ENCODE measurements at regions of chr15 and their contacts with region 1.

Region 1: GRCh38 chr15:92954578-92954977 is 54.5 kb downstream of the CHD2 start:
- DNase-seq: no peak
- ATAC-seq: no peak
- H3K4me3 ChIP-seq: no peak overlapping the region
- H3K27ac ChIP-seq: no peak overlapping the region
- H3K4me1 ChIP-seq: no peaks in the 10 kb centered on the region
- H3K27me3 ChIP-seq: no peaks in the 10 kb centered on the region
- CTCF ChIP-seq: peak in 3 of 4 donors; percentile 10 to 35 (median 23)
- POLR2A ChIP-seq: no peak

Region 2: DNA sequence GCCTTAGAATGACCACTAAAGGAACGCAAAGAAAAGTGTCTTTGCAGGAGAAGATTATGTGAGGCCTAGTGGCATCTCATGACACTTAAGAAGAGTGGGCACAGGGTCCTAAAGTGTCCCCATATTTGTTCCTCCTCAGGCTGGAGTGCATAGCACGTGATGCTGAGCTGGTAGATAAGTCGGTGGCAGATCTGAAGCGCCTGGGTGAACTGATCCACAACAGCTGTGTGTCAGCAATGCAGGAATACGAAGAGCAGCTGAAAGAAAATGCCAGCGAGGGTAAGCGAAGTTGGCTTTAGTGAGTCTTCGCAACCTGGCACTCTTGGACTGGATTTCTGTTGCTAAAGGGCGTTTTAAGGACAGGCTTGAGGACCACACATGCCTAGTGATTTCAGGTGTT is 38.1 kb after region 1 on chr15:
- intact Hi-C with region 1: loop called in 1 of 2 experiments (anchors 10 kb)
- DNase-seq: no peak
- ATAC-seq: no peak
- H3K4me3 ChIP-seq: no peak overlapping the region
- H3K27ac ChIP-seq: no peak overlapping the region
- H3K4me1 ChIP-seq: no peaks in the 10 kb centered on the region
- H3K27me3 ChIP-seq: no peaks in the 10 kb centered on the region
- CTCF ChIP-seq: no peak
- POLR2A ChIP-seq: no peak

Region 3: DNA sequence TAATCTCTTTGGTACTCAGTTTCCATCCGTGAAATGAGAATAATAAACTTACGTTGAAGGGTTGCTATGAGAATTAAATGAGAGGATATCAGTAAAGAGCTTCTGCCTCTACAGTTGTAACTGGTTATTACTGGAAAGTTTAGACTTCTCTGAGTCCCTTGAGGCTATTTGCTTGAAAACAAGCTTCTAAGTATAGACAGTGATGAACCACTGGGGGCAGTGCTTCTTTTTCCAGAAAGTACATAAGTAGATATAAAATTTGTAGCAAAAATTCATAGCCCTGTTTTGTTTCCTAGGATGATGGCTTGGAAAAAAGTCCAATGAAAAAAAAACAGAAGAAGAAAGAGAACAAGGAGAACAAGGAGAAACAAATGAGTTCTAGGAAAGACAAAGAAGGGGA is 47.3 kb after region 1 on chr15:
- intact Hi-C with region 1: loop called (anchors 10 kb)
- DNase-seq: no peak
- ATAC-seq: no peak
- H3K4me3 ChIP-seq: no peak overlapping the region
- H3K27ac ChIP-seq: no peak overlapping the region
- H3K4me1 ChIP-seq: no peaks in the 10 kb centered on the region
- H3K27me3 ChIP-seq: no peaks in the 10 kb centered on the region
- CTCF ChIP-seq: no peak
- POLR2A ChIP-seq: no peak

Measured in right lobe of liver (tissue), 6 donors.